BJ (cell line): ENCODE measurements at regions of chr19 and their contacts with region 1.

Region 1: GRCh38 chr19:18281082-18282020 is at the start of gene JUND:
- DNase-seq: peak; percentile 84
- H3K4me3 ChIP-seq: peak within 1 kb of the TSS; percentile 87
- H3K27me3 ChIP-seq: no peaks in the 10 kb centered on the region
- CTCF ChIP-seq: no peak
- polyA plus RNA-seq, gene JUND: 92.0 and 124 TPM in 2 replicates

Region 2: GRCh38 chr19:17932485-17933338 is 348.6 kb before region 1 on chr19 and contains the start of gene CCDC124:
- CTCF ChIA-PET with region 1: no interaction called
- POLR2A ChIA-PET with region 1: no interaction called
- DNase-seq: peak; percentile 36
- H3K4me3 ChIP-seq: peak within 1 kb of the TSS; percentile 98
- H3K27me3 ChIP-seq: no peaks in the 10 kb centered on the region
- CTCF ChIP-seq: peak; percentile 98
- polyA plus RNA-seq, gene CCDC124: 37.6 and 40.8 TPM in 2 replicates

Region 3: GRCh38 chr19:18251587-18252369 is 29.6 kb before region 1 on chr19:
- CTCF ChIA-PET with region 1: interaction called, 13 read pairs
- POLR2A ChIA-PET with region 1: interaction called, 3 read pairs
- DNase-seq: no peak
- H3K4me3 ChIP-seq: no peak overlapping the region
- H3K27me3 ChIP-seq: peaks cover 5% of the 10 kb centered on the region
- CTCF ChIP-seq: peak; percentile 90

Region 4: DNA sequence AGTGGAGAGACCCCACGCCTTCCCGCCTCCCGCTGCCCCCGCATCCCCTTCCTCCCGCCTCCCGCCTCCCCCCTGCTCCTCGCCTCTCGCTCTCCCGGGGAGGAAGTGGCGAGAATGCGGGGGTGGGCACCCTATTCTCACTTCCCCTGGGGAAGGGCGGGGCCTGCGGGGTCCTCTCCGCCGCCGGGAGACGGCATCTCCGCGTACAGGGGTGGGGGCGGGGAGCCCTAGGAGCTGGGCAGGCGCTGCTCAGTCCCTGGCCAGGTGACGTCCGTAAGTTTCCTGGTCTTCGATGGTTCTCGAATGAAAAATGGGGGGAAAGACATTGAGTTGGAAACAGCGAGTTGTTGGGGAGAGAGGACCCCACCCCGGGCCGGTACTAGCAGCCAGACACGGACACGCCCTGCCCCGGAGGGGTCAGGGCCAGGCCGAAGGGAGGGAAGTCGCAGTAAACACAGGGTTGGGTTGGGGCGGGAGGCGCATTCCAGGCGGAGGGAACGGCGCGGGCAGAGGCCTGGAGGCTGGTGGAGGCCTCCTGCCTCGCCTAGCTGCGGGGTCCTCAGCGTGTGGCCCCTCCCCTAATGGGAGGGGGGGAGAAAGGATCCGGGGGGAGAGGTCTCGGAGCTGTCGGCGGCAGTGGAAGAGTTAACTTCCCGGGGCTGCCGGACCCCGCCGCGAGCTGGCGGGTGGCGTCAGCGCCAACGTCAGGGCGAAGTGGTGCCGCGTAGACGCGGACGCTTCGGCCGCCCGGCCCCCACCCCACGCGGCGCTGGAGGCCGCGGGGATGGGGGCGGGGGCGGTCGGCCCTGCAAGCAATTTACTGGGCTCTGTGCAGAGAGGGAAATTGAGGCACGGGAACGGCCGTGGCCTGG is 10.5 kb after region 1 on chr19:
- CTCF ChIA-PET with region 1: interaction called, 48 read pairs
- POLR2A ChIA-PET with region 1: interaction called, 41 read pairs
- DNase-seq: no peak
- H3K4me3 ChIP-seq: peak overlapping the region; percentile 63
- H3K27me3 ChIP-seq: no peaks in the 10 kb centered on the region
- CTCF ChIP-seq: no peak

Region 5: GRCh38 chr19:18312092-18312534 is 30.8 kb after region 1 on chr19:
- CTCF ChIA-PET with region 1: interaction called, 31 read pairs
- POLR2A ChIA-PET with region 1: no interaction called
- DNase-seq: no peak
- H3K4me3 ChIP-seq: no peak overlapping the region
- H3K27me3 ChIP-seq: no peaks in the 10 kb centered on the region
- CTCF ChIP-seq: no peak

Region 6: GRCh38 chr19:18328340-18329034 is 47.1 kb after region 1 on chr19:
- CTCF ChIA-PET with region 1: interaction called, 252 read pairs
- POLR2A ChIA-PET with region 1: interaction called, 14 read pairs
- DNase-seq: peak; percentile 89
- H3K4me3 ChIP-seq: peak overlapping the region; percentile 18
- H3K27me3 ChIP-seq: no peaks in the 10 kb centered on the region
- CTCF ChIP-seq: peak; percentile 94

Region 7: DNA sequence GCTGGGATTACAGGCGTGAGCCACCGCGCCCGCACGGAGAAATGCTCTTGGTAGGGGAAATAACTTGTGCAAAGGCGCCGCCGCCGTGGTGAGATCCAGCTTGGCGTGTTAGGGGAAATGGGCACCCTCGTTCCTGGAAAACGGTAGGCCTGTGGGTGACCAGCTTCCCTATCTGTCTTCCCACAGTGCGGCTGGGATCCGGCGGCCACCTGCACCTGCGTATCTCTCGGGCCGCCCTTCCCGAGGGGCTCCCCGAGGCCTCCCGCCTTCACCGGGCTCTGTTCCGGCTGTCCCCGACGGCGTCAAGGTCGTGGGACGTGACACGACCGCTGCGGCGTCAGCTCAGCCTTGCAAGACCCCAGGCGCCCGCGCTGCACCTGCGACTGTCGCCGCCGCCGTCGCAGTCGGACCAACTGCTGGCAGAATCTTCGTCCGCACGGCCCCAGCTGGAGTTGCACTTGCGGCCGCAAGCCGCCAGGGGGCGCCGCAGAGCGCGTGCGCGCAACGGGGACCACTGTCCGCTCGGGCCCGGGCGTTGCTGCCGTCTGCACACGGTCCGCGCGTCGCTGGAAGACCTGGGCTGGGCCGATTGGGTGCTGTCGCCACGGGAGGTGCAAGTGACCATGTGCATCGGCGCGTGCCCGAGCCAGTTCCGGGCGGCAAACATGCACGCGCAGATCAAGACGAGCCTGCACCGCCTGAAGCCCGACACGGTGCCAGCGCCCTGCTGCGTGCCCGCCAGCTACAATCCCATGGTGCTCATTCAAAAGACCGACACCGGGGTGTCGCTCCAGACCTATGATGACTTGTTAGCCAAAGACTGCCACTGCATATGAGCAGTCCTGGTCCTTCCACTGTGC is 107.0 kb after region 1 on chr19:
- CTCF ChIA-PET with region 1: interaction called, 17 read pairs
- POLR2A ChIA-PET with region 1: no interaction called
- DNase-seq: no peak
- H3K4me3 ChIP-seq: peak overlapping the region; percentile 81
- H3K27me3 ChIP-seq: no peaks in the 10 kb centered on the region
- CTCF ChIP-seq: peak; percentile 76